Tibial artery (tissue), 4 donors: ENCODE measurements at regions of chr2 and their contacts with region 1.

Region 1: GRCh38 chr2:20661067-20661980 is 5.6 kb upstream of the GDF7 start:
- DNase-seq: peak; percentile 63 to 84
- H3K4me3 ChIP-seq: no peak overlapping the region
- H3K27ac ChIP-seq: no peak overlapping the region
- H3K4me1 ChIP-seq: peaks cover 0 to 23% (median 18%) of the 10 kb centered on the region in 4 donors
- H3K27me3 ChIP-seq: peaks cover 0 to 9% of the 10 kb centered on the region in 2 donors
- CTCF ChIP-seq: peak; percentile 95 to 96

Region 2: GRCh38 chr2:20675701-20676352 is 14.5 kb after region 1 on chr2:
- intact Hi-C with region 1: loop called (anchors 2 kb)
- DNase-seq: no peak
- H3K4me3 ChIP-seq: peak overlapping the region in 1 of 2 donors; percentile 11
- H3K27ac ChIP-seq: peak overlapping the region; percentile 82 to 84
- H3K4me1 ChIP-seq: peaks cover 0 to 74% (median 27%) of the 10 kb centered on the region in 4 donors
- H3K27me3 ChIP-seq: peaks cover 0 to 3% of the 10 kb centered on the region in 2 donors
- CTCF ChIP-seq: no peak

Region 3: DNA sequence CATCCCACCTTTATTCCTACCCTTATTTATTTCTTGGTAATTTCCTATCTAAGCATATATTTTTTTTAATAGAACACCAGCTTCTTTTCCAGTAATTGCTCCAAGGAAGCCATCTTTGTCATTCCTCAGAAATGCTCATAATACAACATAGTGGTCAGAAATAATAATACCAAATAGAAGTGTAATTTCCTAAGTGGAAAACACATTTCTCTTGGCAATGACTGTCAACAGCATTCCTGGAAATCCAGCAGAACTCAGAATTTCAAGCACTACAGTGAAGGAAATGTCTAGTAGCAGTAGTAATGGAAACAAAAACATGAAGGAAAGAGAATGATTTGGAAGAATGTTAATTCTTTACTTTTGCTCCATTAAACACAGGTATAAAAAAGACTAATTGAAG is 62.2 kb after region 1 on chr2:
- intact Hi-C with region 1: no loop called
- DNase-seq: no peak
- H3K4me3 ChIP-seq: no peak overlapping the region
- H3K27ac ChIP-seq: peak overlapping the region; percentile 3 to 22
- H3K4me1 ChIP-seq: peaks cover 0 to 51% (median 9%) of the 10 kb centered on the region in 4 donors
- H3K27me3 ChIP-seq: no peaks in the 10 kb centered on the region
- CTCF ChIP-seq: no peak

Region 4: DNA sequence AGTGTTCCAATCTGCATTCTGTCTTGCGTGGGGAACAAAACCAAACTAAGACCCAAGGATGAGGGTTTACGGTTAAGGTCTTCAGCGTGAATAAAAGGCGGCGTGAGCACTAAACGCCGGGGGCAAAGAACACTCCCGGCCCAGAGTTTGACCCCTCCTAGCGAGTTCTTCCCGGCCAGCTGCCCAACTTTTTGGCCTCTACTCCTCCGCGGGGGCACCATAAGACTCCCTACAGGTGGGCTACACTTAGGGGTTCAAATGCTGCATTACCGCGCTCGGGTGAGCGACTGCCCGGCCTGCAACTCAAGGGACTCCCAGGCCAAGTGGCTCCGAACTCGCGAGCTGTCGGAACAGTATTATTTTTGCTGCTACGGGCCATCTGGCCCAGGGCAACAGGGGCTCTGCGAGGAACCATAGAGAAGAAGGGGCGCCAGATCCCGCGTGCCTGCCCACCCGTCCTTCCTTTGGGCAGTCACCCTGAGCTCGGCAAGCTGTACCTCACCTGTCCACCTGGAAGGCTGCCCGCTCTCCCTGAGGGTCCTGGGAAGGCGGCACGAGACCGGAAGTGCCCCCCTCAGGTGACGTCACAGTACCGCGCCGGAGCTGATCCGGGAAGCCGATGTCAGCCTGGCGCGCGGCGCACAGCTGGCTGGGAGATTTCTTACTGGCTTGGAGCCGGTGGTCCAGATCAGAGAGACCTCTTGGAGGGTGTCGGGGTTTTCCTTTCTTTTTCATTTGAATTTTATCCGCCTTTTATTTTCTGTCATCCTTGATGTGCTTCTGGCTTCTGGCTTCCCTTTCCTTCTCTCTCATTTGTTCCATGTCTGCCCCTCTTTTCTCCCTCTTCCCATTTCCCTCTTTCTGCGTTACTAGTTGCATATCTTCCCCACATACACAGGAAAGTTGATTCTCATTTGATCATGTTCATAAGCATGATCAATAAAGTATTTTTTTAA is 161.5 kb after region 1 on chr2 and contains the start of gene LDAH:
- intact Hi-C with region 1: loop called (anchors 5 kb)
- DNase-seq: peak; percentile 83 to 94
- H3K4me3 ChIP-seq: peak within 1 kb of the TSS; percentile 66 to 95
- H3K27ac ChIP-seq: peak within 1 kb of the TSS; percentile 86 to 96
- H3K4me1 ChIP-seq: no peaks in the 10 kb centered on the region
- H3K27me3 ChIP-seq: no peaks in the 10 kb centered on the region
- CTCF ChIP-seq: no peak

Region 5: DNA sequence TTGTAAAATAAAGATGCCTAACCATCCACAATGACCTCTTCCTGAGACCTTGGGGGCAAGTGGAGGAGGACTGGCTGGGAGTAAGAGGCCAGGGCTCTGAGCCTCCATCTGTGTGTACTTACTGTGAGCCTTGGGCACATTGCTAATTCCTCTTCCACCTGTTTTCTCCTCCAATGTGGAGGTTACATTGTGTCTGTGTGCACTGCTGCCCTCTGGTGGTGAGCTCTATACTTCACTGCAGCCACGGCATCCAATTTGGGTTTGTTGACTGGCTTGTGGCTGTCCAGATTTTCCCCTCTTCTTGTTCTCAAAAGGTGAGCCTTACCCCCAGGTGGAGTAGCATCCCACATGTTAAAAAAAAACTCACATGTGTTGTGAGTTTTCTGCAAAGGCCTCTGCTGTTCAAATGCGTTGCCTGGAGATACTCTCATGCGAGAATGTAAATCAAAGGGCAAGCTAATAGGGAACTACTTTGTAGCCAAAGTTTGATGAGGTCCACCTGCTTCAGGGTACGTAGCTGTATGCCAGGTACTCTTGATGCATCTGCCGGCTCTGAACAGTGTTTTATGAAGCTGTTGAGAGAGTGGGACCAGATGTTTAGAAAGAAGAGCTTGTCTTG is 301.7 kb after region 1 on chr2:
- intact Hi-C with region 1: loop called (anchors 5 kb)
- DNase-seq: peak; percentile 78 to 79
- H3K4me3 ChIP-seq: no peak overlapping the region
- H3K27ac ChIP-seq: peak overlapping the region in 1 of 2 donors; percentile 62
- H3K4me1 ChIP-seq: peaks cover 0 to 37% (median 17%) of the 10 kb centered on the region in 4 donors
- H3K27me3 ChIP-seq: no peaks in the 10 kb centered on the region
- CTCF ChIP-seq: peak; percentile 79 to 83

Region 6: DNA sequence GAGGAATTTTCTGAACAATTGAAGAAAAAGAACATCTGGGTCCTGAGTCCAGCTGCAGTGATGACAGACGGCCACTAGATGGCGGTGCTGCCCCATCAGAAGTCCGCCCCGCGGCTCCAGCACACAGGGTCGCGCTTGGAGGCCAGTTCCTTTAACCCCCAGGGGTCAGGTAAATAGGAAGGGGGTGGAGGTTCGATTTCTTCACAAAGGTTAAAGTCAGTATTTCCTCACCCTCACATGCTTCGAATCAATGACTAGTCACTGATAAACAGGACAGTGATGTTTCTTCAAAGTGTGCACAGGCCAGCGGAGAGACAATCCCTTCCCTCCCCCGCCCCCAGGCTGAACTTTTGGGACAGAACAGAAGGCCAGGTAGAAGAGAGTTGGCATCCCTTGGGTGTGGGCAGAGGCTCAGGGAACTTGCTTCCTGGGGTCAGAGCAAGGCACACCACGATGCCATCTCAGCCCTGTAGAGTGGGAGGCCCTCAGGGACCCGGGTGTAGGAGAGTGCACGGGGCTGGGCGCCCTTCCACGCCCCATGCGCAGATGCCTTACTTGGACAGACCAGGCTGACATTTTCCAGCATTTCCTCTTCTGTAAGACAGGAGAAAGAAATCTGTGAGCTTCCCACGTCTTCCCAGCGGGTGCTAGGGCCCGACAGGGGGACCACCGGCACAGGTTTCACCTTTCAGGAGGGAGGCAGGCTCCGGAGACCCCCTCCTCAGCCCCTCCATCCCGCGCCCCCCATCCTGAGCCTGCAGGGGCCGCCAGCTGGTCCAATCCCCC is 381.8 kb after region 1 on chr2:
- intact Hi-C with region 1: loop called (anchors 10 kb)
- DNase-seq: peak; percentile 65 to 78
- H3K4me3 ChIP-seq: peak overlapping the region; percentile 36 to 40
- H3K27ac ChIP-seq: peak overlapping the region; percentile 74 to 89
- H3K4me1 ChIP-seq: peaks cover 0 to 45% (median 27%) of the 10 kb centered on the region in 4 donors
- H3K27me3 ChIP-seq: no peaks in the 10 kb centered on the region
- CTCF ChIP-seq: peak; percentile 96 to 99